ENCODE measurements at regions of chr2 and their contacts with region 1.

Region 1: DNA sequence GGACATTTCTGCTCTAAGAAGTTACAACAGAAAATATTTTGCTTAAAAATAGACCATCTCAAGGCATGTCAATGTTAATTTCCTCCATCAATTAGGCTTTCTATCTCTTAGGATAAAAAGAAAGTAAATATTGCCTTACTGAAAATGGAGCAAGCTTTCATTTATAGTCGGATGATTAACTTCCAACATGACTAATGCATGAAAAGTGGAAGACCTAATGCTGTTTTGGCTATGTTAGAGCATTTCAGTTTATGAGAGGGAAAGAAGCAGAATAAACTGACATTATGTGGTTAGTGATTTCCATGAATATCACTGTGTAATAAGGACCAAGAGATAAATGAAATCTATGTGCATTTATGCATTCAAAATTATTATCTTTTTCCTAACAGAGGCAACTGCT is 475.2 kb upstream of the UBE2E3 start:
- DNase-seq: no peak
- H3K4me3 ChIP-seq: no peak overlapping the region
- H3K27ac ChIP-seq: peak overlapping the region in 3 of 59 donors; percentile 12 to 32 (median 16)
- H3K27me3 ChIP-seq: no peaks in the 10 kb centered on the region
- CTCF ChIP-seq: no peak

Region 2: GRCh38 chr2:180222644-180223043 is 282.6 kb before region 1 on chr2:
- intact Hi-C with region 1: loop called in 1 of 2 experiments (anchors 10 kb)
- DNase-seq: peak in 5 of 10 donors; percentile 13 to 66 (median 51)
- H3K4me3 ChIP-seq: no peak overlapping the region
- H3K27ac ChIP-seq: peak overlapping the region in 16 of 59 donors; percentile 4 to 60 (median 40)
- H3K27me3 ChIP-seq: no peaks in the 10 kb centered on the region
- CTCF ChIP-seq: no peak

Region 3: GRCh38 chr2:180952082-180952481 is 446.9 kb after region 1 on chr2:
- intact Hi-C with region 1: no loop called
- DNase-seq: no peak
- H3K4me3 ChIP-seq: no peak overlapping the region
- H3K27ac ChIP-seq: no peak overlapping the region
- H3K27me3 ChIP-seq: no peaks in the 10 kb centered on the region
- CTCF ChIP-seq: no peak